Endothelial cell of umbilical vein (primary cell): ENCODE measurements at regions of chr2 and their contacts with region 1.

Region 1: DNA sequence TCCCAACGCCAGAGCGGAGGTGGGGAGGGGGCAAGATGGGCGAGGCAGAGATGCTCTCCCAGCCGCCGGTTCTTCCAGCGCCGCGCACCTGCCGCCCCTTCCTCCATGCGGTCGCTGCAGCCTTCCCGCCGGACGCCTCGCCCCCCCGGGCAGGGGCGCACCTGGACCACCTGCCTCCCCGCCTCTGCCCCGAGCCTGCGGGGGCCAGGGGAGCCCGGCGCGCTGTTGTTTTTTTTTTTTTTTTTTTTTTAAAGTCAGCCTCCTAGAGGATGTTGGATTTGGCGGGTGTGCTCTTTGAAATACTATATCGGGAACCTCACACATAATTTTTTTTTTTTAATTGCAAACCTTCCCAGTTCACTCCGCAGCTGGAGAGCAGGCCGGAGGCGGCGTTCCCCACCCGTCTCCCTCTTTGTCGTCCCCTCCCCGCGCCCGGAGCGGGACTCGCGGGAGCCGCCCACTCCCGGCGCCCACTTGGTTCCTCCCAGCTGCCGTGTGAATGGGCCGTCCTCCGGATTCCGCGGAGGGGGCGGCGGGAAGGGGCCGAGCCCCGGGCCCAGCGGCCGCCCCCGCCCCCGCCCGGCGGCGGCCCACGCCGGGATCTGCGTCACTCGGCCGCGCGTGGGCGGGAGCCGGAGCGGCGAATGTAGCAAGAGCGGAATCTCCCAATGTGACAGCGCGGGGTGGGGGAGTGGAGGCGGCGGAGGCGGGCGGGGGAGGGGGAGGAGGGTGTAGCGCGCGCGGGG is 421 bp upstream of the NAB1 start:
- DNase-seq: peak; percentile 83
- H3K4me3 ChIP-seq: peak overlapping the region; percentile 72 to 92 (median 77)
- H3K27ac ChIP-seq: peak overlapping the region; percentile 52
- H3K4me1 ChIP-seq: peaks cover 23% of the 10 kb centered on the region
- H3K27me3 ChIP-seq: no peaks in the 10 kb centered on the region
- CTCF ChIP-seq: no peak
- POLR2A ChIP-seq: peak; percentile 38

Region 2: DNA sequence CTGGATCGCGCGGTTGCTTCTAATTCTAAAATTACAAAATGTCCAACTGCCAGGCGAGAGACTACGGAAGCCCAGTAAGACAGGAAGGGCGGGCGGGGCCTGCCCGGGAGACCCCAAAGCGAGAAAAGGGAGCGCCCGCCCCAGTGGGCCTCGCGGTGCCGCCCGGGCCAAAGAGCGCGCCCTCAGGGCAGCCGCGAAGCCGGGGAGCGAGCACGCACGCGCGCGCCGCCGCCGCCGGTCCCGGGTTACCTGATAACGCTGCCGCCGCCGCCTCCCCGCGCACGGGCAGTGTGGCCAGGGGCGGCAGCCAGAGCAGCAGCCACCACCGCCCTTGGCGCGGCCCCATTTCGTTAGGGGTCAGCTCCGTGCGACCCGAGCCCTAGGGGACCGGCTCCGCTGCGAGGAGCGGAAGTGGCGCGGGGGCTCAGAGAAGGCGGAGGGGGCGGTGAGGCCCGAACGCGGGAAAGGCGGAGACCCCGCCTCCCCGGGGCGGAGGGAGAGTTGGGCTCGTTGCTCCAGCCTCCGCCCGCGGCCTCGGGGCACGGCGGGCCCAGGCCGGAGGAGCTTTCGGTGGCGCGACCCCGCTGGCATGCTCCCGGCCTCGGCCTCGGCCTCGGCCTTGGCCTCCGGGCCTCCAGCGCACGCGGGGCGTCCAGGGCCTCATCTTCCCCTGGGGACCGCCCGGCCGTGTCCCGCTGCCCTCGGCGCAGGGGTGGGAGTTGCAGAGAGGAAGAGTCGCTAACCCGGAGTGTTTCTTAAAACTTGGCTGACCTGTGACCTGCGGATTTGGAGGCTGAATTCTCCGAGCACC is 113.9 kb before region 1 on chr2 and contains the start of gene NEMP2:
- CTCF ChIA-PET with region 1: no interaction called
- POLR2A ChIA-PET with region 1: no interaction called
- dilution Hi-C with region 1: no loop called
- intact Hi-C with region 1: loop called (anchors 1 kb)
- DNase-seq: peak; percentile 61
- H3K4me3 ChIP-seq: peak within 1 kb of the TSS; percentile 63 to 85 (median 66)
- H3K27ac ChIP-seq: peak within 1 kb of the TSS; percentile 3
- H3K4me1 ChIP-seq: peaks cover 9% of the 10 kb centered on the region
- H3K27me3 ChIP-seq: no peaks in the 10 kb centered on the region
- CTCF ChIP-seq: no peak
- POLR2A ChIP-seq: peak; percentile 59
- total RNA-seq, gene NEMP2: 3.8 and 8.4 TPM in 2 replicates

Region 3: DNA sequence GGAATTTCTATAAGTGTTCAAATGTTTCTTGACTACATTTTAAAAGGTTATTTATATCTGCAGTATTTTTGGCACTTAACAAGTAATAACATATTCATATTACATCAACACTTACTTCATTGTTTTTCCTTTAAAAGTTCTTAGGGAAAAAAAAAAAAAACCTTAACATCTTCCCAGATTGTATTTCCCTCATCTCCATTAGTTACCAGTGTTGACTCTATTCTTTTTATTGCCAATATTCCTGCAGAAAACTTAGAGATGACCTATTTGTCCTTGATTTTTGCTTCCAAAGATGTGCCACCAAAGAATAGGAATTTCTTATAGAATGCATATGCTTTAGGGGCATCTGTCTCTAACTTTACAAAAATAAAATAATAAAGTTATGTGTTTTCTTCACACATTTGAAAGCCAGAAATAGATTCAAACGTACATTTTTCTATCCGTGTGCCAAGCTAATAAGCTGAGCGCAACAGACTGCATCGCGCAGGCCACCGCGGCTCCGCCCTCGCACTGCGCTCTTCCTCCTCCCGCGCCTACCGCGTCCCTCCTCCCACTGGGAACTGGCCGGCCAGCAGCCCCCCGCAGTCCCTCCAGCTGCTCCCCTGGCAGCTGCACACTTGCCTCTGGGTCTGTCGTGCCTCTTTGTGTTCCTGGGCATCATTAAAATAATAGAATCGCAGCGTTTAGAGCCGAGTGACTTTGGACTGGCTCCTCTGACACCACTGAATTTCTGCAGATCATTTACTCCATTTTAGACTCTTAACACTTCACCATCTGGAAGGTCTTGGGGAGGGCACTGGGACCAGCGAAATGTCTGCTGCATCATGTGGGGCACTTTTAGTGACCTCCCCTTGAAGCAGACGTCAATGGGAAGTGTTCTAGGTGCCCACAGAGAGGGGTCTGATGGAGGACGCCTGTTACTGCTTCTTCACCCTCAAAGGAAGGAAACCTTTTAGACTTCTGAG is 20.7 kb before region 1 on chr2:
- CTCF ChIA-PET with region 1: no interaction called
- POLR2A ChIA-PET with region 1: no interaction called
- dilution Hi-C with region 1: no loop called
- intact Hi-C with region 1: no loop called
- DNase-seq: peak; percentile 23
- H3K4me3 ChIP-seq: peak overlapping the region; percentile 33 to 47 (median 35)
- H3K27ac ChIP-seq: no peak overlapping the region
- H3K4me1 ChIP-seq: peaks cover 3% of the 10 kb centered on the region
- H3K27me3 ChIP-seq: no peaks in the 10 kb centered on the region
- CTCF ChIP-seq: no peak
- POLR2A ChIP-seq: no peak

Region 4: GRCh38 chr2:190664240-190664639 is 15.8 kb after region 1 on chr2:
- CTCF ChIA-PET with region 1: interaction called, 19 read pairs
- POLR2A ChIA-PET with region 1: no interaction called
- dilution Hi-C with region 1: no loop called
- intact Hi-C with region 1: no loop called
- DNase-seq: no peak
- H3K4me3 ChIP-seq: no peak overlapping the region
- H3K27ac ChIP-seq: no peak overlapping the region
- H3K4me1 ChIP-seq: no peaks in the 10 kb centered on the region
- H3K27me3 ChIP-seq: no peaks in the 10 kb centered on the region
- CTCF ChIP-seq: no peak
- POLR2A ChIP-seq: no peak

Region 5: DNA sequence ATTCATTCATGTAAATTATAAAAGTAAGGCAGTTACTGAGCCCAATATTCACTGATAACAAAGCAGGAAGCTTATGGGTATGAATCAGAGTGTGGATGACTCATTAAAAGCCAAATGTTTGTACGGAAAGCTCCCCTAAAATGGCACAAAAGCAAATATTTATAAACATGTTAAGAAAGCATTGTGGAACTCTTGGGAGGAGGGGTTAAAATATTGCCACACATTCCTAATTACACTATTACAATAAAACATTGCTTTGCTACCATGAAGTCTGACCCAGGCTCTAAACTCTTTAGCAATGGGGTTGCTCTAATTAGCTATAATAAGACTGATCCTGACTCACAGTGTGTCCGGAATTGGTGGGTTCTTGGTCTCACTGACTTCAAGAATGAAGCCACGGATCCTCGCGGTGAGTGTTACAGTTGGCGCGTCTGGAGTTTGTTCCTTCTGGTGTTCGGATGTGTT is 111.3 kb after region 1 on chr2:
- CTCF ChIA-PET with region 1: no interaction called
- POLR2A ChIA-PET with region 1: no interaction called
- dilution Hi-C with region 1: no loop called
- intact Hi-C with region 1: loop called (anchors 2 kb)
- DNase-seq: peak; percentile 87
- H3K4me3 ChIP-seq: no peak overlapping the region
- H3K27ac ChIP-seq: peak overlapping the region; percentile 65
- H3K4me1 ChIP-seq: peaks cover 10% of the 10 kb centered on the region
- H3K27me3 ChIP-seq: no peaks in the 10 kb centered on the region
- CTCF ChIP-seq: no peak
- POLR2A ChIP-seq: no peak

Region 6: GRCh38 chr2:190880378-190881073 is 232.1 kb after region 1 on chr2 and contains the start of gene GLS:
- CTCF ChIA-PET with region 1: no interaction called
- POLR2A ChIA-PET with region 1: interaction called, 7 read pairs
- dilution Hi-C with region 1: no loop called
- intact Hi-C with region 1: loop called (anchors 2 kb)
- DNase-seq: peak; percentile 98
- H3K4me3 ChIP-seq: peak within 1 kb of the TSS; percentile 80 to 99 (median 98)
- H3K27ac ChIP-seq: peak within 1 kb of the TSS; percentile 83
- H3K4me1 ChIP-seq: peaks cover 32% of the 10 kb centered on the region
- H3K27me3 ChIP-seq: no peaks in the 10 kb centered on the region
- CTCF ChIP-seq: no peak
- POLR2A ChIP-seq: peak; percentile 99
- total RNA-seq, gene GLS: 181 and 183 TPM in 2 replicates